K562 (cell line): ENCODE measurements at regions of chr4 and their contacts with region 1.

Region 1: DNA sequence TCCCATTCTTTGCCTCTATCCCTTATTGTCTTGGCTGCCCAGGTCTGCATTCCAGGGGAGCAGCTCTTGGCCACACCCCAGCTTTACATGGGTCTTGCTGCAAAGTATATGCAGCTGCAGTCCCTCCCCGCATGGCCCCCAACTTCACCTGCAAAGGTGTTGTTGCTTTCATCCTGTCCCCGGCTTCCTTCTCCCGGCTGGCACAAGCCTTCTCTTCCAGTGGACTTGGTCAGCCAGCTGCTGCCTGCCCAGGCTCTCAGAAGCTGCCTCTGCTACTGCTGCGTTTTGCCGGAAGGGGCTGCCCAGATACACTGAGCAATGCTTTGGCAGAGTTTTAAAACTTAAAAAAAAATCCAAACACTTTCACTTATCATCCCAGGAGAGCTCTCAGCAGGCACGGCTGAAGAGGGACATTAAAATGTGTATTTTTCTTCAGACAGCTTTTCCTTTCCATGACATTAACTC is 121.2 kb upstream of the PDLIM3 start:
- DNase-seq: no peak
- ATAC-seq: no peak
- H3K4me3 ChIP-seq: no peak overlapping the region
- H3K27ac ChIP-seq: no peak overlapping the region
- H3K4me1 ChIP-seq: no peaks in the 10 kb centered on the region
- H3K27me3 ChIP-seq: peaks cover 8 to 36% of the 10 kb centered on the region in 2 experiments
- CTCF ChIP-seq: no peak
- EP300 ChIP-seq: no peak
- POLR2A ChIP-seq: no peak
- RAD21 ChIP-seq: no peak

Region 2: DNA sequence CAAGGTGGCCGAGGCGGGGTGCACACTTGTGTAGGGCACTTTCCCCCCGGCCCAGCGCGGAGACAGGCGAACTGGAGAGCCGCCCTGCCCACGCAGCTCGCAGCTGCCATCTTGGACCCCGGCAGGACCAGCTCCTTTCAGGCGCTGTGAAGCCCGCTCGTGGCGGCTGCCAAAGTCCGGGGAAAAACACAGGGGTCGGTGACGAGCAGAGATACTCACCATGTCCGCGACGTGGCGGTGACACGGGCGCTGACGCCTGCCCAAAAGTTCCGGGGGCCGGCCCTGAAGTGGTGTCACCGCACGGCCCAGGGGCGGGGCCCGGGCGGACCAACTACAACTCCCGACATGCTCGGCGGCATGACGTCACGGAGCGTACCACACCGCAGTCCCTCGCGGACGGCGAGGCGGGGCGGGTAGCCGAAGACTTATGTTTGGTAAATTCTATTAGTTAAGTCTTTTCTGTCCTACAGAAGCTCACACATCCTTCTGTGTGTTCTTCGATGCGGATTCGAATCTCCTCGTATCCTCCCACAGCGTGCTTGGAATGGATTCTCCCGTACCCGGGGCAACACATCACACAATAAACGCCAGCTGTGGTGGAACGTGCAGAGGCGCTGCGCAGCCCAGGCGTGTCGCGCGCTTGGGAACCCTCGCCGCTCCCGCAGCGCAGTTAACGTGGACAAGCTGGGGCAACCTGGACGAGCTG is 230.7 kb before region 1 on chr4 and contains the start of gene UFSP2:
- CTCF ChIA-PET with region 1: no interaction called
- POLR2A ChIA-PET with region 1: no interaction called
- in situ Hi-C with region 1: no loop called
- intact Hi-C with region 1: no loop called
- DNase-seq: peak; percentile 91 to 93 (median 92)
- ATAC-seq: peak; percentile 92
- H3K4me3 ChIP-seq: peak within 1 kb of the TSS; percentile 74
- H3K27ac ChIP-seq: peak within 1 kb of the TSS; percentile 98
- H3K4me1 ChIP-seq: peaks cover 0 to 7% of the 10 kb centered on the region in 2 experiments; a peak in 2 of 5 replicates
- H3K27me3 ChIP-seq: no peaks in the 10 kb centered on the region
- CTCF ChIP-seq: no peak; a peak in 1 of 6 replicates
- EP300 ChIP-seq: no peak
- POLR2A ChIP-seq: peak; percentile 75; the same call in 1 of the 2 replicates
- RAD21 ChIP-seq: no peak
- polyA plus RNA-seq, gene UFSP2: 41.0 to 45.7 TPM

Region 3: DNA sequence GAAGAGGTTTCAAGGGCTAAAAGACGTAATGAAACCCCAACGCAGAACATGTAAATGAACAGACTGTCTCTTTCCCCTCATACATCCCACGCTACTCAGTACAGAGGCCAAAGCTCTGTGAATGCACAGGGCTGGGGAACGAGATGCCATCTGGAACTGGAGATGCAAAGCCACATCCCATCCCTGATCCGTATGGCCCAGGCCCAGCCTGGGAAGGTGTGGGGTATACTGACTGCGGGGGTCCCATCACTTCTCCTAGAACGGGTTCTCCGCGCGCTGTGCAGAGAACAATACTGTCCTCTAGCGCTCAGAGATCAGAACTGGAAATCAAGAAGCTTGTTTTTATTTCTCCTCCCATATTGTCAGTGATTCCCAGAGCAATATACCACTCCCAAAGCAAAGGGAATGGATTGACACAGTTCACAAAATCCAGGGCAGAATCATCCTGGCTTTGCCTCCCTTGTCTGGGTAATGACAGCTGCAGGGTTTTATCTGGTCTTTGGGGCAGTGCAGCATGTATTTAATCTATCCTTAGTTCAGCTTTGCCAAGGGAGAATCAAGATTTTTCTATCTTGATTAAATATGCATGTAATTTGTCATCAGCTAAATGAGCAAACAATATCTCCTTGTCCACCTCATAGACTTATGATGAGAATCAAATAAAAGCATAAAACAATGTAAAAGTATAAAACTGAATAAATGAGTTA is 365.1 kb after region 1 on chr4:
- CTCF ChIA-PET with region 1: no interaction called
- POLR2A ChIA-PET with region 1: no interaction called
- in situ Hi-C with region 1: loop called (anchors 10 kb)
- intact Hi-C with region 1: no loop called
- DNase-seq: peak in 2 of 4 experiments; percentile 7 to 17
- ATAC-seq: peak; percentile 67
- H3K4me3 ChIP-seq: no peak overlapping the region
- H3K27ac ChIP-seq: no peak overlapping the region
- H3K4me1 ChIP-seq: no peaks in the 10 kb centered on the region
- H3K27me3 ChIP-seq: peaks cover 20 to 43% of the 10 kb centered on the region in 2 experiments; a peak in 4 of 5 replicates
- CTCF ChIP-seq: peak; percentile 50 to 60 (median 58)
- EP300 ChIP-seq: no peak
- POLR2A ChIP-seq: no peak
- RAD21 ChIP-seq: peak; percentile 36 to 66